Cardiac septum (tissue), 1 donor: ENCODE measurements at regions of chr14 and their contacts with region 1.

Region 1: GRCh38 chr14:103292426-103293374 is 41.3 kb upstream of the EIF5 start:
- DNase-seq: peak; percentile 83

Region 2: DNA sequence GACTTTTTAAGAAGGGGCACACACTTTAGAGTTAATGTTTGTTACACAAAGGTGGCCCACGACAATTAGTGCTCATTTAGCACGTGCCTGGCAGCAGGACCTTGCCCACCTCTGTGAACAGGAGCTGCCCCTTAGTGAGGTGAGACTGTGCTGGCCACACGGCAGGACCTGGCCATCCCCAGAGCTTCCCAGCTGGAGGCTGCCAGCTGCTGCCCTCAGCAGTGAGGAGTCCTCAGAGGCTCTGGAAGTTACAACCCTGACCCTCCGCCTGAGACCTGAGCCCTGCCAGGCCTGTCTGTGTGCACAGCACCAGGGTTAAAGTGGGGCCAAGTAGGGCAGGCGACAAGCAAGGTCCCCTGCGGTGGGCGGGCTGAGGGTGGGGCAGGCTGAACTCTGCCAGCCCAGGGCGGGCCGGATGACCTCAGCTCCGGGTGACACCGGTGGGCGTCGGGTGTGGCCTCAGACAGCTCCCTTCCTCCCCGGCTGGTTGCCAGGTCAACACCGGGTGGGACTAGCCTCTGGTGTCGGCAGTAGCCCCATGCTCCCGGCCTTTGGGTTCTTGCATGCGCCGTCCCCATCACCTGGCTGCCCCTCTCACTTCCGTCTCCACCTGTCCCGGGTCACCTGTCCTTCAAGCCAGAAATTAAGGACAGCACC is 217.9 kb before region 1 on chr14:
- intact Hi-C with region 1: loop called (anchors 2 kb)
- DNase-seq: peak; percentile 86

Region 3: GRCh38 chr14:103104654-103105452 is 187.8 kb before region 1 on chr14:
- intact Hi-C with region 1: loop called (anchors 2 kb)
- DNase-seq: peak; percentile 93

Region 4: DNA sequence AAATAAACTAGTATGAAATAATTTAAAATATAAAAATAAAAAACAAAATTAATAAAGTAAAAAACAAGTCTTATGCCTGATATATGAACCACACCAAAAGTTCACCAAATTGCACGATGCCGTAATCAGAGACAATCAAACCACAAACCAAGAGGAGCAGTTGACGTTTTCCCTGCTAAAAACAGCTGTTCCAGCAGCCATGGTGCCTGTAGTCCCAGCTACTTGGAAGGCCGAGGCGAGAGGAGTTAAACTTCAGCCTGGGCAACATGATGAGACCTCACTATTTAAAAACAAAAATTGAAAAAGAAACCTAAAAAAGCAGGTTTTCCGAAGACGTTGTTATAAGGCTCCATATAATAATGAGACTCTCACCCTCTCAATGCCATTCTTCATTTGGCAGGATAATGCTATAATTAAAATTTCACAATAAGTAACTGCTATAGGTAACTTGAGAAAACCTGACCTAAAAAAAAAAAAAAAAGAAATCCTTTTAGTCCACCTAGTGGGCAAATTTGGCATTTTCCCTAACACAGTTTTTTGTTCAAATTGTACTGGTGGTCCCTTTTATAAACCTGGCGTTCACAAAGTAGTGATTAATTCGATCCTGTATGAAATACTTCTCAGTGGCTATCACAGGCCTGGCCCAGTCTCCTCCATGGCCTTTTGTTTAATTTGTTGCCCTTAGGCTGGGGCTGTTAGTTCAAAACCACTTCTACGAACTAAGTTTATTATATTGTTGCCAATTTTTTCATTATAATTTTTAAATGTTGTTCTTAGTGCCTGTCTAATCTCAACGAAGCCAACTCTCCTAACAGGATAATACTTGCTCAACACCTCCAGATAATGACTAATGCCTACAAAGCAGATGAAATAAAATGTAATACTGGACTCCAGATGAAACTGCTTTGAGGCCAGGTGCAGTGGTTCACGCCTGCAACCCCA is 107.4 kb before region 1 on chr14:
- intact Hi-C with region 1: loop called (anchors 5 kb)
- DNase-seq: no peak

Region 5: GRCh38 chr14:103385152-103385993 is 92.7 kb after region 1 on chr14 and contains the start of gene MARK3:
- intact Hi-C with region 1: no loop called
- DNase-seq: peak; percentile 99
- total RNA-seq, gene MARK3: 69.4 TPM

Region 6: GRCh38 chr14:103401223-103402214 is 108.8 kb after region 1 on chr14:
- intact Hi-C with region 1: no loop called
- DNase-seq: no peak

Region 7: GRCh38 chr14:103500148-103500990 is 207.7 kb after region 1 on chr14:
- intact Hi-C with region 1: no loop called
- DNase-seq: peak; percentile 89

Region 8: DNA sequence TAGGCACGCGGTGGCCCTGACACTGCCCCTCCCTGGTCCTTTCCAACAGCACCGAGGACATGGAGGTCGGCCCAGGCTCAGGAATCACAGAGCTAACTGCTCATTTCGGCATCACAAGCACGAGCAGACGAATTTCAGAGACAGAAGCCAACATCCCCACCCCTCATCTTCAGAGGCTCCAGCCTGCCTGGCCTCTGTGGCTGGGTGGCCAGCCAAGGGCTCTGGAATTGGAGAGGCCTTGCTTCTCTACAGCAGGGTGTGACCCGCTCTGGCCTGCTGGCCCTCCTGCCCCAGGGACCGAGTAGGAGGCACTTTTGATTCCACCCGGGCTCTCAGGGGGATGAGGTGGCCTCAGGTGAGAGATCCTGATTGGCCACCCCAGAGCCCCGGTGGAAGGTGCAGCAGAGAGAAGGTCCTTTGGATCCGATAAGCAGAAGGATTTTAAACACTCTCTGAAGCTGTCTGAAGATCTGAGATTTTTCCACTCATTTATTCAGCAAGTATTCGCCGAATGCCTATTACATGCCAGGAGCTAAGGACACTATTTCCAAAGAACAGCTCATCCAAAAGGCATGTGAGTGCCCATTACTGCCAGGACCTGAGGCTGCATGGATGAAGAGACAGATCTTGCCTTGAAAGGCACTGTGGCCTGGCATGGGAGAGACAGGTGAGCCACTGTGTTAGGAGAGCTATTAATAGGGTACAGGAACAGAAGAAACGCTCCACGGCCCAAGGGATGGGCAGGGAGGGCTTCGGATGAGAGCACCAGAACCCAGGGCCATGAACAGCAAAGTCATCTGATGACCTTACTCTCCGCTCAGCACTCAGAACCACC is 259.5 kb after region 1 on chr14:
- intact Hi-C with region 1: no loop called
- DNase-seq: peak; percentile 75